Transverse colon (tissue), 4 donors: ENCODE measurements at regions of chr15 and their contacts with region 1.

Region 1: GRCh38 chr15:69763831-69764230 is 311.2 kb downstream of the RPLP1 start:
- DNase-seq: no peak
- H3K4me3 ChIP-seq: no peak overlapping the region
- H3K27ac ChIP-seq: no peak overlapping the region
- H3K4me1 ChIP-seq: peaks cover 0 to 5% (median under 1%) of the 10 kb centered on the region in 4 donors
- H3K27me3 ChIP-seq: no peaks in the 10 kb centered on the region
- CTCF ChIP-seq: no peak
- EP300 ChIP-seq: no peak
- POLR2A ChIP-seq: no peak

Region 2: DNA sequence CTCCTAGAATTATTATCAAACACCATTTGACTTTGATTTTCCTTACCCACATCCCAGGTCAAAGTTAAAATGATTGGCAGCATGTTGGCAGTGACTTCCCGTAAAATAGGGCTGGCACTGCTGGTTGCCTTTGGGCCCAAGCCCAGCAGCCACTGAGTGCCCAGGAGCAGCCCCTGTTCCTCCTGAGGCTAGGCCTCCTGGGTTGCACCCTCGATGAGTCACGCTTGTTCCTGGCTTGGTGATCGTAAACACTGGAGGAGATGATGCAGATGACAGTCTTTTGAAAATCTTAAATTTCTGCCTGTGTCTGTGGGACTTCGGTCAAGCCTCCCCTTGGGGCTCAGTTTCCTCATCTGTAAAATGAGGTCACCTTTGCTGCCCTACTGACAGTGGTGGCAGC is 43.9 kb after region 1 on chr15:
- in situ Hi-C with region 1: no loop called
- intact Hi-C with region 1: loop called (anchors 1 kb)
- DNase-seq: no peak
- H3K4me3 ChIP-seq: no peak overlapping the region
- H3K27ac ChIP-seq: no peak overlapping the region
- H3K4me1 ChIP-seq: peaks cover 0 to 3% (median 1%) of the 10 kb centered on the region in 4 donors
- H3K27me3 ChIP-seq: peaks cover 5% of the 10 kb centered on the region
- CTCF ChIP-seq: no peak
- EP300 ChIP-seq: no peak
- POLR2A ChIP-seq: no peak